Endothelial cell of umbilical vein (primary cell): ENCODE measurements at regions of chr6 and their contacts with region 1.

Region 1: GRCh38 chr6:4313044-4313686 is 177.8 kb upstream of the ECI2 start:
- DNase-seq: peak; percentile 95
- H3K4me3 ChIP-seq: no peak overlapping the region
- H3K27ac ChIP-seq: peak overlapping the region; percentile 56
- H3K4me1 ChIP-seq: peaks cover 23% of the 10 kb centered on the region
- H3K27me3 ChIP-seq: no peaks in the 10 kb centered on the region
- CTCF ChIP-seq: peak; percentile 28 to 45
- POLR2A ChIP-seq: no peak

Region 2: GRCh38 chr6:4687989-4688947 is 375.1 kb after region 1 on chr6:
- CTCF ChIA-PET with region 1: no interaction called
- POLR2A ChIA-PET with region 1: no interaction called
- dilution Hi-C with region 1: no loop called
- intact Hi-C with region 1: loop called (anchors 5 kb)
- DNase-seq: peak; percentile 87
- H3K4me3 ChIP-seq: peak overlapping the region in 1 of 3 experiments; percentile 54
- H3K27ac ChIP-seq: peak overlapping the region; percentile 80
- H3K4me1 ChIP-seq: peaks cover 11% of the 10 kb centered on the region
- H3K27me3 ChIP-seq: peaks cover 4% of the 10 kb centered on the region in 2 experiments
- CTCF ChIP-seq: no peak
- POLR2A ChIP-seq: no peak

Region 3: GRCh38 chr6:4848382-4849068 is 535.4 kb after region 1 on chr6:
- CTCF ChIA-PET with region 1: interaction called, 7 read pairs
- POLR2A ChIA-PET with region 1: no interaction called
- dilution Hi-C with region 1: no loop called
- intact Hi-C with region 1: loop called (anchors 1 kb)
- DNase-seq: peak; percentile 56
- H3K4me3 ChIP-seq: no peak overlapping the region
- H3K27ac ChIP-seq: no peak overlapping the region
- H3K4me1 ChIP-seq: peaks cover 12% of the 10 kb centered on the region
- H3K27me3 ChIP-seq: no peaks in the 10 kb centered on the region
- CTCF ChIP-seq: peak; percentile 23 to 34
- POLR2A ChIP-seq: no peak

Region 4: GRCh38 chr6:4957521-4958231 is 644.5 kb after region 1 on chr6:
- CTCF ChIA-PET with region 1: interaction called, 3 read pairs
- POLR2A ChIA-PET with region 1: no interaction called
- dilution Hi-C with region 1: no loop called
- intact Hi-C with region 1: loop called (anchors 1 kb)
- DNase-seq: peak; percentile 11
- H3K4me3 ChIP-seq: no peak overlapping the region
- H3K27ac ChIP-seq: no peak overlapping the region
- H3K4me1 ChIP-seq: no peaks in the 10 kb centered on the region
- H3K27me3 ChIP-seq: peaks cover 0 to 1% of the 10 kb centered on the region in 2 experiments
- CTCF ChIP-seq: no peak
- POLR2A ChIP-seq: no peak

Region 5: GRCh38 chr6:5030596-5031136 is 717.5 kb after region 1 on chr6:
- CTCF ChIA-PET with region 1: interaction called, 13 read pairs
- POLR2A ChIA-PET with region 1: no interaction called
- dilution Hi-C with region 1: no loop called
- intact Hi-C with region 1: loop called (anchors 1 kb)
- DNase-seq: peak; percentile 83
- H3K4me3 ChIP-seq: no peak overlapping the region
- H3K27ac ChIP-seq: no peak overlapping the region
- H3K4me1 ChIP-seq: peaks cover 7% of the 10 kb centered on the region
- H3K27me3 ChIP-seq: no peaks in the 10 kb centered on the region
- CTCF ChIP-seq: peak; percentile 71 to 74
- POLR2A ChIP-seq: no peak

Region 6: GRCh38 chr6:5529733-5530132 is 1216.6 kb after region 1 on chr6:
- CTCF ChIA-PET with region 1: no interaction called
- POLR2A ChIA-PET with region 1: no interaction called
- dilution Hi-C with region 1: no loop called
- intact Hi-C with region 1: no loop called
- DNase-seq: no peak
- H3K4me3 ChIP-seq: no peak overlapping the region
- H3K27ac ChIP-seq: no peak overlapping the region
- H3K4me1 ChIP-seq: no peaks in the 10 kb centered on the region
- H3K27me3 ChIP-seq: no peaks in the 10 kb centered on the region
- CTCF ChIP-seq: no peak
- POLR2A ChIP-seq: no peak